Right cardiac atrium (tissue), 5 donors: ENCODE measurements at regions of chr5 and their contacts with region 1.

Region 1: DNA sequence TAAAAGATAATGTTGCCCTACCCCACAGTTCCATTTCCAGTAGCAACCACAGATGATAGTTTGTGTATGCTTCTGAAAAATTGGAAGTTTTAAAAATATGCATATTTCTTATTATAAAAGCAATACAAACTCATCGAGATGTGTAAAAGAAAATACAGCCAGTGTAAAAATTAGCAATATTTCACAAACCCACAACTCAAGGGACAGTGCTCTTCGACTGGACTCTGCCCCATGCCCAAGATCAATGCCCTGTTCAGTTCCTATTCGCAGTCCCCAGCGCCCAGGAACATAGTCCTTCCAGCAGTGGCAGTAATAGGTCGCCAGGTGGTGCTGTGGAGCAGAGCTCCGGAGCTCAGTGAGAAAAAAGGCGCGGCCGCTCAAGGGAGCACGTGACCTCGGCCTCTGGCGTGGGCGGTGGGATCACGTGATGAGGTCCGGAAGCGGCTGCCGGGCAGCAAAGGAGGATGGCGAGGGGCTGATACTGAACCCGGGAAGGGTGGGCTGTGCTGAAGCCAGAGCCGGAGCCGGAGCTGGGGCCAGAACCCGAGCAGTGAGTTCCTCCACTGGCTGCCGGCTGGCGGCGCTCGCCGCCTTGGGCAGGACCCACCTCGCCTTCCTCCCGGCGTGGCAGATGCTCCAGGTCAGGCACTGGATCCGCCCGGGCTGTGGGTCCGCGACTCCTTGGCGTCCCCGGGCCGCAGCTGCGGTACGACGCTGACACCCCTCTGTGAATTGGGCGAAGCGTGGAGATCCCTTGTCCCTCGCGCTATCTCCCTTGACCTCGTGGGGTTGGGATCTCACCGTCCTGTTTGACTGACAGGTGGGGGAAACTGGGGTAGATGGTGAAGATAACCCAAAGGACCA is at the start of gene SLC36A1:
- DNase-seq: peak; percentile 95 to 98 (median 98)
- ATAC-seq: peak; percentile 92 to 97
- H3K4me3 ChIP-seq: peak within 1 kb of the TSS; percentile 65
- H3K27ac ChIP-seq: peak within 1 kb of the TSS; percentile 13
- H3K4me1 ChIP-seq: no peaks in the 10 kb centered on the region
- H3K27me3 ChIP-seq: no peaks in the 10 kb centered on the region
- total RNA-seq, gene SLC36A1: 3.0 to 6.2 (median 5.1) TPM

Region 2: DNA sequence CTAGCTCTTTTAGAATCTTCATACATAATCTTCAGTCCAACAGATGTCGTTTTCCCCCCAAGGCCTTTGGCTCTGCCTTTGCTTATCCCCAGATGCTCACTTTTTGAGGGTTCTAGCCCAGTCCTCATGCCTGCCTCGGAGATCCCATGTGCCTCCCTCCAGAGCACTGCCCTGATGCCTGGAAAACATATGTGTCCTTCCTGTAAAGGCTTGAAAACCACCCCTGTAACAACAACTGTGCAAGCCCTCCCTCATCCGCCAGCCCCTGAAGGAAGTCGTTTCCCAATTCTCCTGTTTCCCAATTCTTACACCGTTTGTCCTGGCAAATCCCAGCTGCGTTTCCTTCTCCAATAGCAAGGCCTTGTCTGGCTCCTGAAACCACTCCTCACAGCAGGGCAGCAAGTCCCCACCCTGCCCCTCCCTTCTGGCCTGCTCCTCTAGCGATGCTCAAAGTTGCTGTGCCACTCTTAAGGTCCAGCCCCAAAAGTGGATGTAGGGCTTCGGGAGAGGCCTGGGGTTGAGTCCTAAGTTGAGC is 52.2 kb after region 1 on chr5:
- intact Hi-C with region 1: loop called (anchors 5 to 10 kb)
- DNase-seq: no peak
- ATAC-seq: peak; percentile 40 to 50
- H3K4me3 ChIP-seq: no peak overlapping the region
- H3K27ac ChIP-seq: no peak overlapping the region
- H3K4me1 ChIP-seq: no peaks in the 10 kb centered on the region
- H3K27me3 ChIP-seq: no peaks in the 10 kb centered on the region

Region 3: GRCh38 chr5:151509231-151509630 is 61.8 kb after region 1 on chr5:
- intact Hi-C with region 1: loop called (anchors 5 to 10 kb)
- DNase-seq: no peak
- ATAC-seq: no peak
- H3K4me3 ChIP-seq: no peak overlapping the region
- H3K27ac ChIP-seq: no peak overlapping the region
- H3K4me1 ChIP-seq: no peaks in the 10 kb centered on the region
- H3K27me3 ChIP-seq: no peaks in the 10 kb centered on the region

Region 4: DNA sequence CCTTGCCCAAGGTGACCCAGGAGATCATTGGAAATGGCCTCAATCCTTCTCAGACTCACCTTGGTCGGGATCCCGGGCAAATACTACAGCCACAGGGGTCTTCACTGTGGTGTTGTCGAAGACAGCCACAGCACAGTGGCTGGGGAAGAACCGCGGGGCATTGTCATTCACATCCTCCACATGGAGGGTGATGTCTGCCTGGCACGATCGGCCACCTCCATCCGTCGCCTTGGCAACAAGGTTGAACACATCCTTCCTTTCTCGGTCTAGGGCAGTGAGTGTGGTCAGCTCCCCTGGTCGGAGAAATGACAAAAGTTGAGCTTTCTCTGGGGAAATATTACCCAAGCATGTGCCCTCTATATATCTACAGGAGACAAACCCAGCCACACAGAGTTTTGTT is 86.9 kb after region 1 on chr5:
- intact Hi-C with region 1: no loop called
- DNase-seq: no peak
- ATAC-seq: no peak
- H3K4me3 ChIP-seq: no peak overlapping the region
- H3K27ac ChIP-seq: no peak overlapping the region
- H3K4me1 ChIP-seq: no peaks in the 10 kb centered on the region
- H3K27me3 ChIP-seq: no peaks in the 10 kb centered on the region

Region 5: DNA sequence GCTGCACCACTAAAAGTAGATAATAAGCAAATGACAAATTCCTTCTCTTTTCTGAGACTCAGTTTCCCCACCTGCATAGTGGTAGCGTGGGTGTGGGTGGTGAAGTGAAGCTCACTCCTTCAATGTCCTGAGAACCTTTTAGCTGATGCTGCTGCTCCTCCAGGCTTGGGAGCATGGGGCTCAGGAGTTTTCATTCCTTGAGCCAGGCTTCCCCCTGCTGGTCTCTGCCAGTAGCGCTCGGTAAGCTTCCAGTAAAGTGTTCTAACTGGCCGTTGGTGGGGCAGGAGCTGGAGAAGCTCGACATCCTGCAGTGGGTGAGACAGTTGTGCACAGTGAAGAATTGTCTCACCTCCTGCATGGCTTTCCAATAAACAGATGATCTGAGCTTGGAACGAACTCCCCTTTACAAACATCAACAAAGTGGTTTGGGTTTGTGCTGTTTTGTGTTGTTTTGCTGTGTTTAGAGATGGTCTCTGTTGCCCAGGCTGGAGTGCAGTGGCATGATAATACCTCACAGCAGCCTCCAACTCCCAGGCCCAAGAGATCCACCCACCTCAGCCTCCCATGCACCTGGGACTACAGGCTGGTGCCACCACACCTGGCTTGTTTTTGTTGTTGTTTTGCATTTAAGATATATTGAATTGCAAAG is 204.7 kb after region 1 on chr5:
- intact Hi-C with region 1: loop called (anchors 2 to 5 kb)
- DNase-seq: peak; percentile 78 to 91 (median 89)
- ATAC-seq: peak; percentile 94 to 95
- H3K4me3 ChIP-seq: no peak overlapping the region
- H3K27ac ChIP-seq: no peak overlapping the region
- H3K4me1 ChIP-seq: no peaks in the 10 kb centered on the region
- H3K27me3 ChIP-seq: no peaks in the 10 kb centered on the region